Activated CD8-positive, alpha-beta T cell treated with anti-CD3 and anti-CD28 coated beads for 36 hours (primary cell): ENCODE measurements at regions of chr14 and their contacts with region 1.

Region 1: GRCh38 chr14:68248481-68249255 is 429.1 kb downstream of the RAD51B start:
- DNase-seq: no peak
- ATAC-seq: peak; percentile 70
- H3K4me3 Mint-ChIP-seq: no peak overlapping the region
- H3K27ac Mint-ChIP-seq: no peak overlapping the region
- H3K4me1 Mint-ChIP-seq: peaks cover 41% of the 10 kb centered on the region
- H3K27me3 Mint-ChIP-seq: no peaks in the 10 kb centered on the region
- CTCF ChIP-seq: peak; percentile 87

Region 2: GRCh38 chr14:67943947-67944346 is 304.7 kb before region 1 on chr14:
- CTCF ChIA-PET with region 1: interaction called, 3 read pairs
- POLR2A ChIA-PET with region 1: no interaction called
- intact Hi-C with region 1: loop called (anchors 10 kb)
- DNase-seq: peak; percentile 67
- ATAC-seq: peak; percentile 65
- H3K4me3 Mint-ChIP-seq: no peak overlapping the region
- H3K27ac Mint-ChIP-seq: no peak overlapping the region
- H3K4me1 Mint-ChIP-seq: peaks cover 2% of the 10 kb centered on the region
- H3K27me3 Mint-ChIP-seq: no peaks in the 10 kb centered on the region
- CTCF ChIP-seq: peak; percentile 82

Region 3: DNA sequence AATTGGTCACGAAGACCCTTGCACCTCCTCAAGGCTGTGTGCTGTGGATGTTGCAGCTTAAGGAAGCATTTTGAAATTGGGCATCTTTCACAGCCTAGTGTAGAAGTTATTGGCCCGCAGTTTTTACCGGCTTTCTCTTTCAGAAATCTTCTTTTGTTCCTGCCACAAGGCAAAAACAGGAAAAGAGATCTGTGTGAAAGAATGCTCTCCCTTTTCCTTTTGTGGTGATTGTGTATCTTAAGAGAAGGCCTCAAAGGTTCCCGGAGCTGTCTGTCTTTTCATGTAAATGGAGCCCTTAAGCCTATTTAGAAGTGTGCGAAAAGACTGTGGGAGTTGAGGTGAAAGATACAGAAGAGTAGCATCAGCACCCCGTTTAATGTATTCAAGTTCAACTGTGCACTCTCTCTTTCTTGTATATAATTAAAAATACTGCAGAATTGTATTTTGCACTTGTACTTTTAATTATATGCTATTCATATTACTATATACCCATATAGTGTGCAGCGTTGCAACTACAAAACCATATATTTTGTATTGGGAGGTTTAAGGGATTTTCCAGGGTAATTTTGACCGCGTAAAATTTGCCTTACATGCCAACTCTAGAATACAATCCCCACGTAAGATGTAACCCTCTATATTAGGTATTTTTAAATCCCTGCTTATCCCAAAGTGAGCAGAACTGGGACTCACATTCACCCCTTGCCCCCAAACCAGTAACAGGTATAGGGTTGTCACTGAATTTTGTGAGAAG is 12.6 kb after region 1 on chr14:
- CTCF ChIA-PET with region 1: interaction called, 21 read pairs
- POLR2A ChIA-PET with region 1: interaction called, 3 read pairs
- intact Hi-C with region 1: no loop called
- DNase-seq: no peak
- ATAC-seq: no peak
- H3K4me3 Mint-ChIP-seq: peak overlapping the region; percentile 28
- H3K27ac Mint-ChIP-seq: peak overlapping the region; percentile 7
- H3K4me1 Mint-ChIP-seq: peaks cover 54% of the 10 kb centered on the region
- H3K27me3 Mint-ChIP-seq: no peaks in the 10 kb centered on the region
- CTCF ChIP-seq: no peak

Region 4: GRCh38 chr14:68451696-68452373 is 203.2 kb after region 1 on chr14:
- CTCF ChIA-PET with region 1: no interaction called
- POLR2A ChIA-PET with region 1: no interaction called
- intact Hi-C with region 1: no loop called
- DNase-seq: no peak
- ATAC-seq: no peak
- H3K4me3 Mint-ChIP-seq: no peak overlapping the region
- H3K27ac Mint-ChIP-seq: no peak overlapping the region
- H3K4me1 Mint-ChIP-seq: no peaks in the 10 kb centered on the region
- H3K27me3 Mint-ChIP-seq: no peaks in the 10 kb centered on the region
- CTCF ChIP-seq: no peak